GM10248 (cell line): ENCODE measurements at regions of chr5 and their contacts with region 1.

Region 1: DNA sequence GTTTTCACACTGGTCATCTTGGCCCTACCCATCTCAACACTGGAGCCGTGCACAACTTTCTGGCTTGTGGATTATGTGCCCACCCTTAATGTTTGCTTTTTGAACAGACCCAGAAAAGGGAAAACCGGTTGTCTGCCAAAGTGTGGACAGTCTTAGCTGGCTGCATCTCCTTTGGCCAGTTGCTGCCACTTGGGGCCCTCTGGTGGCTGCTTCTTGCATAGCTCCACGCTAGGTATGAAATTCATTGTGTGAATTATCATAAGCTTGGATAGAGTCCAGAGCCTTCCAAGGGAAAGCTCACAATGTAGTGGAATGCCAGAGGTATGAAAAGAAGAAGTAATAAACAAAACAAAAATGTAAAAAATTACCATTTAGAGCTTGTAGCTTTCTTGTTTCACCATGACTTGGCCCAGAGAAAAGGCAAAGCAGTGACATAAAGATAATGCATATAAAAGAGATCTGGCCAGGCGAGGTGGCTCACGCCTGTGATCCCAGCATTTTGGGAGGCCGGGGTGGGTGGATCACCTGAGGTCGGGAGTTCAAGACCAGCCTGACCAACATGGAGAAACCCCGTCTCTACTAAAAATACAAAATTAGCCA is 12.5 kb upstream of the SLC36A3 start:
- DNase-seq: peak; percentile 80
- CTCF ChIP-seq: peak; percentile 95

Region 2: DNA sequence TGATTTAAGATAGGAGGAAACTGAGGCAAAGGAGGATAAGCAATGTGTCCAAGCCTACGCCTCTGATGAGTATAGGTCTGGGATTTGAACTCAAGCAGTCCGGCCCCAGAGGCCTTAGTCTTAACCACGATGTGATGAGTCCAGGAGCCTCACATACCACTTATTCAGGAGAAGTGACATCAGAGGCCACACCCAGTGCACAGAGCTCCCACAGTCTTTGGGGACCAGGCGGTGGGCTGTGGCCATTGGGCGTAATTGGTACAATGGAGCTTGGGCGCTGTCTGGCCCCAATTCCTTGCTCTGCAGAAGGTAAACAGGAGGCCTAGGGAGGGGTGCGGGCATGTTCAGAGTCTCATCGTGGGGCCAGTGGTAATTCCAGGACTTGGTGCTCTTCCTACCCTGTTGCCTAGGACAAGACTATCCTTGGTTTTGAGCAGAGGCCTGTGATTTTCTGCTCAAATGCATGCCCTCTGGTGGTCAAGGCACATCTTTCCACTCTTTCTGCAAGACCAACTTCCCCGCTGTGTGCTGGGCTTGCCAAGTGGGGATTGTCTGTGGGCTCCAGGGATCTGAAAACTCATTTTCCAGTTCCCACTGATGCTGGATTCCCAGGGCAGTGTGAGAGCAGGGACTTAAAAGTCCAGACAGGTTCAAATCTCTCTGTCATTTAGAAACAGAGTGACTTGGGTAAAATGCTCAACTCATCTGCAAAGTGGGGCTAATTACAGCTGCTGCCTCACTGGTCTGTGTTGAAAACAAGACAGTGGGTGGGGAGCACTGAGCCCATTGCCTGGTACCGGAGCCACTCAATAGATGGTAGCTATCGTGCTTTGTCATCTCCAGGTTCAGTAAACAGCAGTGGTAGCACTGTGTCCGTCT is 792.4 kb before region 1 on chr5:
- CTCF ChIA-PET with region 1: no interaction called
- POLR2A ChIA-PET with region 1: no interaction called
- DNase-seq: peak; percentile 75
- CTCF ChIP-seq: peak; percentile 44

Region 3: DNA sequence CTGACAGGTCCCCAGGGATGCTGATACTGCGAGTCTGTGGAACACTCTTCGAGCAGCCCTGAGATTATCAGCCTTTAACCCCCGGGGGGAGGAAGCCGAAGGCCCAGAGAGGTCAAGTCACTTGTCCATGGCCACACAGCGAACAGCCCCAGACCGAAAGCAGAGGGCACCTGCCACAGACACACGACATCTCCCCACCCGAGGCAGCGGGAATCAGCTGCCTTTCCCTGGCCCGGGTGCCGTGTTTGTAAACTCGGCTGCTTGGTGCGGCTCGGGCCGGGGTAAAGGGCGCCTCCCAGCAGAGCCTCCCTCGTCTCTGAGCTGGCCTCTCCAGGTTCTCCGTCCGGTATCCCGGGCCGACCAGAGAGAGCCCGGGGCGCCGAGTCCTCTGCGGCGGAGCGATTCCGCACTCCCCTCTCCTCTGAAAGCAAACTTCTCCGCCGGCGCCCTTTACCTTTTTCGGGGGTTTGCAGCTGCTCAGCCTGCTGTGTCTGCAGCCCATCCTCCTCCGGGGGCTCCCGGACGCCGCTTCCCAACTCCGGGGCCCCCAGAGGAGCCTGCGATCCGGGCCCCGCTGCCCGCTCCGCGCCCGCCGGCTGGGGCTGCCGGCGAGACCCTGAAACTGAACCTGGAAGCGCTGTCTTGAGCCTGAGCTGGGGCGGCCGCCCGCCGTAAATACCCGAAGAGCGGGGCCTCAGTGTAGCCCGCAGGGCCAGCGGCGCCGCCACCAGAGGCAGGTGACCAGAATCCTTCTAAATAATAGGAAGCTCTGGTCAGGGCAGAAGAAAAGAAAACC is 92.4 kb before region 1 on chr5 and contains the start of gene CCDC69:
- CTCF ChIA-PET with region 1: interaction called, 13 read pairs
- POLR2A ChIA-PET with region 1: no interaction called
- DNase-seq: peak; percentile 76
- CTCF ChIP-seq: no peak

Region 4: GRCh38 chr5:151280443-151280842 is 35.7 kb before region 1 on chr5:
- CTCF ChIA-PET with region 1: interaction called, 28 read pairs
- POLR2A ChIA-PET with region 1: no interaction called
- DNase-seq: no peak
- CTCF ChIP-seq: no peak

Region 5: DNA sequence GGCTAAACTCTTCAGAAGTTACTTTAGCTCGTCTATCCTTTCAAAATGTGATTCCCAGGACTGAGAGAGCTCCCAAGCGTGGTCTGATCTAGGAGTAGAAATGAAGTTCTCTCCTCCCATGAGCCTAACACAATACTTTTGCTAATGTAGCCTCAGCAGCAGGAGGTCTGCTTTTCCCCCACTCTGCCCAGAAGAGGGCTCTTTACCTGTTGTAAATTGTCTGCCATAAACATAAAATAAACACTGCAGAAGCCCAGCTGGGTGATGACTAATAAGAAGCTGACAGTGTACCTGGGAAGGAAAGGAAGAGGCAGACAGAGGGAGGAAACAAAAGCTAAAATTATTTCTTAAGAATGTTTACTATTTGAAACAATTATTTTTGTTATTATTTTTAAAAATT is 27.9 kb before region 1 on chr5:
- CTCF ChIA-PET with region 1: interaction called, 28 read pairs
- POLR2A ChIA-PET with region 1: no interaction called
- DNase-seq: peak; percentile 23
- CTCF ChIP-seq: peak; percentile 35

Region 6: DNA sequence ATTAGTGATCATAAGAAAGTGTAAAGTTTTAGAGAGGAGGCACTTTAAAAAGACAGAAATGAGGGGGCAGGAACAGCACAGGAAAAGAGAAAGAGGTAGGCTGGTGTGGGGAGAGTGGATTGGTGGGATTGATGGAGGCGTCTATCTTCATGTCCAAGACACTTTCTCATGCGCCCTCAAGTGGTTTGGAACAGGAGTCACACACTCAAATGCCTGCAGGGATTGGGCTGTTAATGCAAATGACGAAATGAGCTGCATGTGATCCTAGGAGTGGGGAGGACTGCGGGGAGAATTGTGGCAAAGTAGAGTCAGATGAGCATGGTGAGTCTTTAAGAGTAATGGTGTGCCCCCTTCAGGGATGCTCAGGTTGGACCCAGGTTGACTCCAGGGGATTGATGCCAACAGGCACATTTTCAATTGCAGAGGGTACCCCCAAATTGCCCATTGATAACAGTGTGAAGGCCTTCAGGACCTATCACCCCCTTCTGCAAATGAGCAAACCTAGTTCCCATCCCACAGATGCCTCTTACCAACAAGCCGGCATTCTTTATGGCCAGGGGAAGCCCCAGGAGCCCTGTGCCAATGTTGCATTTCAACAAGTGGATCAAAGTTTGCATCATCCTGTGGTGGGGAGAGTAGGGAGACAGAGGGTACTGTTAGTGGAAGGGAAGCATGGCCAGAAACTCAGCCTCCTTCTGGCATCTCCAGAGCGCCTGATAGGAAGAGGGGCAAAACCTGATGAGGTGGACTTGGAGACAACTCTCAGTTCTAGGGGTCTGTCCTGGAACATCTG is 17.8 kb before region 1 on chr5:
- CTCF ChIA-PET with region 1: interaction called, 14 read pairs
- POLR2A ChIA-PET with region 1: no interaction called
- DNase-seq: no peak
- CTCF ChIP-seq: no peak